H1 (cell line): ENCODE measurements at regions of chr11 and their contacts with region 1.

Region 1: GRCh38 chr11:68798221-68798813 is 43.4 kb downstream of the CPT1A start:
- DNase-seq: peak; percentile 23 to 89
- H3K4me3 ChIP-seq: no peak overlapping the region
- H3K27ac ChIP-seq: no peak overlapping the region
- H3K4me1 ChIP-seq: peaks cover 0 to 4% (median 2%) of the 10 kb centered on the region in 4 experiments; a peak in 3 of 7 replicates
- H3K27me3 ChIP-seq: no peaks in the 10 kb centered on the region
- CTCF ChIP-seq: peak; percentile 79 to 93 (median 91)
- EP300 ChIP-seq: no peak
- POLR2A ChIP-seq: no peak
- RAD21 ChIP-seq: peak; percentile 60 to 73

Region 2: GRCh38 chr11:68751004-68751856 is 47.1 kb before region 1 on chr11 and contains the start of gene TESMIN:
- CTCF ChIA-PET with region 1: interaction called, 12 read pairs
- POLR2A ChIA-PET with region 1: interaction called, 3 read pairs
- DNase-seq: peak; percentile 85 to 99
- H3K4me3 ChIP-seq: peak within 1 kb of the TSS; percentile 39 to 62 (median 52)
- H3K27ac ChIP-seq: peak within 1 kb of the TSS; percentile 80
- H3K4me1 ChIP-seq: peaks cover 0 to 10% (median 5%) of the 10 kb centered on the region in 4 experiments; a peak in 4 of 7 replicates
- H3K27me3 ChIP-seq: no peaks in the 10 kb centered on the region
- CTCF ChIP-seq: no peak
- EP300 ChIP-seq: peak in 1 of 2 experiments; percentile 81; a peak in 1 of 3 replicates
- POLR2A ChIP-seq: peak; percentile 74 to 78
- RAD21 ChIP-seq: peak in 1 of 2 experiments; percentile 10; a peak in 1 of 4 replicates
- total RNA-seq, gene TESMIN: 59.5 and 61.1 TPM in 2 replicates

Region 3: DNA sequence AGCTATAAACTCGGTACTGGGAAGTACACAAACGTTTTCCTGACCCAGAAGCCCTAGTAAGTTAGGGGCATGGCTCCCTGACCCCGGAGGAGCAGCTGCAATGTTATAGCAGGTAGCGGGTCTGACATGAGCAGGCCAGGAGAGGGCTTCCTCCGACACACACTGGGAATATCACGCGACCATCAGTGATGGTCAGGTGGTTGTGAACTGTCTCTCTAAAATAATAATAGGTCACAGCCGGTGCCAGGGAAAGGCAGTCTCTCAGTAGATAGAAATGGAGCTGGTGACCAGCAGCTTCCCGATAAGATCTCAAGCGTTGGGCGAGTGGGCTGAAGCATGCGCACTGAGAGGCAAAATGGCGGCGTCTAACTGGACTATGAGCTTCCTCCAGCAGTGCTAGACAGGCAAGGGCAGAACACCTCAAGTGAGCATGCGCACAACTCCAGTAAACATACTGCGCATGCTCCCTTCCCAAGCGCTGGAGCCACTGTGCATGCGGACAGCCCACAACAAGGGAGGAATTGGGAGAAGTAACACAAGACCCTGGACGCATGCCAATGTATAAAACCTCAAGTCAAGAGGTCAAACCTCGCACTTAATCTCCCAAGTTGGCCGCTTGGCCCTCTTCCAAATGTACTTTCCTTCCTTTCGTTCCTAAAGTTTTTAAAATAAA is 24.7 kb before region 1 on chr11:
- CTCF ChIA-PET with region 1: interaction called, 13 read pairs
- POLR2A ChIA-PET with region 1: no interaction called
- DNase-seq: no peak
- H3K4me3 ChIP-seq: no peak overlapping the region
- H3K27ac ChIP-seq: no peak overlapping the region
- H3K4me1 ChIP-seq: no peaks in the 10 kb centered on the region
- H3K27me3 ChIP-seq: no peaks in the 10 kb centered on the region
- CTCF ChIP-seq: no peak
- EP300 ChIP-seq: no peak
- POLR2A ChIP-seq: no peak
- RAD21 ChIP-seq: no peak

Region 4: GRCh38 chr11:68816917-68817419 is 18.7 kb after region 1 on chr11:
- CTCF ChIA-PET with region 1: interaction called, 63 read pairs
- POLR2A ChIA-PET with region 1: no interaction called
- DNase-seq: no peak
- H3K4me3 ChIP-seq: no peak overlapping the region
- H3K27ac ChIP-seq: no peak overlapping the region
- H3K4me1 ChIP-seq: peaks cover 0 to 2% (median 0%) of the 10 kb centered on the region in 4 experiments; a peak in 3 of 7 replicates
- H3K27me3 ChIP-seq: no peaks in the 10 kb centered on the region
- CTCF ChIP-seq: no peak
- EP300 ChIP-seq: no peak
- POLR2A ChIP-seq: no peak
- RAD21 ChIP-seq: no peak

Region 5: DNA sequence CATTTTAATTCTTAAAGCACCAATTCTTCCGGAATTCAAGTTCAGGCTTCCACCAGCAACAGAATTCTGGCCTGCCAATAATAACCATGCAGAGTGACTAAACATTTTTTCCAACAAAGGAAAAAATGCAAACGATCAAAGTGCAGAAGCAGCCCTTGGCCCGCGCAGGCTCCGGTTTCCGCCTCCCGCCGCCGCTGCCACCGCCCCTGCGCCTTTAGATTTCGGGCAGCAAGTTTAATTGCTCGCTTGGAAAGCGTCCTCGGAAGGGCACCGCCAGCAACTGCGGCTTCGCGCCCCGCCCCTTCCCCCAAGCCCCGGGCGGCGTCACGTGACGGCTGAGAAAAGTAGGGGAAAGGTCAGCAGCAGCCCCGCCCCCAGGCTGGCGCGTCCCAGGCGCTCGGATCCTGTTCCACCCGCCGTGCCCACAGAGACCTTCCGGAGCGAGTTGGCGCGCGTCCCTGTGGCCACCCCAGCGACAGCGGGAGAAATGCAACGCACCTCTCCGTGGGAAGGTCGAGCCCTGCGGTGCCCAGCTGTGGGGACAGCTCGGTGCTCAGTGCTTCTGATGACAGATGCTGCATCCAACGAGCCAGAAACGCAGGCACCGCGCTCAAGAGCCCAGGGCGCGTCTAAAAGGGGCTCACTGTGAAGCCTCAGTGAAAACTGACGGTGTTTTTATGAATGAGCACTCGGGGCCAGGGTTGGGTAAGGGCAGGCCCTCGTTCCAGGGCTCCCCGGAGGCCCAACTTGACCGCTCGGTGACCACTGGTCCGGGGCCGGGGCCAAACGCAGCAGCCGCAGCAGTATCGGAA is 40.9 kb after region 1 on chr11:
- CTCF ChIA-PET with region 1: interaction called, 10 read pairs
- POLR2A ChIA-PET with region 1: no interaction called
- DNase-seq: peak; percentile 75 to 97
- H3K4me3 ChIP-seq: peak overlapping the region; percentile 32 to 69 (median 56)
- H3K27ac ChIP-seq: no peak overlapping the region
- H3K4me1 ChIP-seq: peaks cover 3 to 12% (median 7%) of the 10 kb centered on the region in 4 experiments; a peak in 6 of 7 replicates
- H3K27me3 ChIP-seq: peaks cover 22 to 50% (median 39%) of the 10 kb centered on the region in 4 experiments
- CTCF ChIP-seq: no peak
- EP300 ChIP-seq: no peak
- POLR2A ChIP-seq: no peak
- RAD21 ChIP-seq: peak in 1 of 2 experiments; percentile 15; a peak in 1 of 4 replicates

Region 6: GRCh38 chr11:69630009-69630408 is 831.7 kb after region 1 on chr11:
- CTCF ChIA-PET with region 1: no interaction called
- POLR2A ChIA-PET with region 1: no interaction called
- DNase-seq: no peak
- H3K4me3 ChIP-seq: no peak overlapping the region
- H3K27ac ChIP-seq: no peak overlapping the region
- H3K4me1 ChIP-seq: peaks cover 0 to 4% (median 2%) of the 10 kb centered on the region in 4 experiments; a peak in 3 of 7 replicates
- H3K27me3 ChIP-seq: peaks cover 0 to 4% (median 3%) of the 10 kb centered on the region in 4 experiments; a peak in 3 of 7 replicates
- CTCF ChIP-seq: no peak
- EP300 ChIP-seq: no peak
- POLR2A ChIP-seq: no peak
- RAD21 ChIP-seq: no peak